Ovary (tissue), 10 donors: ENCODE measurements at regions of chr9 and their contacts with region 1.

Region 1: DNA sequence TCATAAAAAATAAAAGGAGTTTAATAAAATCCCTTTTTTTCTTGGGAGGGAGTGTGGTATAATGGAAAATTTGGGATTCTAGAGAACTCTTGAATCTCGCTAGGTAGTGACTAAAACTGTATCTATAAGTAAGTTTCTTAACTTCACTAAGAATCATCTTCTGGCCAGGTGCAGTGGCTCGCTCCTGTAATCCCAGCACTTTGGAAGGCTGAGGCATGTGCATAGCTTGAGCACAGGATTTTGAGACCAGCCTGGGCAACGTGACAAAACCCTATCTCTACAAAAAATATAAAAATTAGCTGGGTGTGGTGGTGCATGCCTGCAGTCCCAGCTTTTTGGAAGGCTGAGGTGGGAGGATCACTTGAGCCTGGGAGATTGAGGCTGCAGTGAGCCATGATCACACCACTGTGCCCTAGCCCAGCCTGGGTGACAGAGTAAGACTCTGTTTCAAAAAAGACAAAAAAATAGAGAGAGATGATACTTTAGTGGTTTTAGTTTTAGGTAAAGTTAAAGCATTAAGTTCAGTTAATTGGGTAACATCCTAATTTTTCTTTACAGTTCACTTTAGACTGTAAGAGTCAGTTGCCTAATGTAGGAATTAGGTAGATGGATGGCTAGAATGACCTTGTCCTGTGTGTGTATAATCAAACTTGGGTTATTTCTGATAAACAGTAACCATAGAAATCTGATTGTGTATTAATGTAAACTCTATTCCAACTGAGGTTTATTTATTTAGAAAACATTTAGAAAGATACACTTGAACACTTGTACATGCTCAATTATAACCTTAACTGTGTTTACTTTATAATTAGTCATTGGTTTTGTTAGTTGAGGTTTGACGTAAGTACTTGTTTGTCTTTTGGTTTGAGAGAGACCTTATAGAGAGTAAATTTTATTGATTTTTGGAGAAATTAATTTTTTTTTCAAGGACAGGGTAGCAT is 17.8 kb downstream of the UNC13B start:
- DNase-seq: no peak
- H3K4me3 ChIP-seq: no peak overlapping the region
- H3K27ac ChIP-seq: no peak overlapping the region
- H3K4me1 ChIP-seq: no peaks in the 10 kb centered on the region
- H3K27me3 ChIP-seq: no peaks in the 10 kb centered on the region
- CTCF ChIP-seq: no peak
- EP300 ChIP-seq: no peak
- POLR2A ChIP-seq: no peak

Region 2: GRCh38 chr9:35237311-35237710 is 57.7 kb after region 1 on chr9:
- intact Hi-C with region 1: loop called in 1 of 4 experiments (anchors 10 kb)
- DNase-seq: no peak
- H3K4me3 ChIP-seq: no peak overlapping the region
- H3K27ac ChIP-seq: no peak overlapping the region
- H3K4me1 ChIP-seq: no peaks in the 10 kb centered on the region
- H3K27me3 ChIP-seq: no peaks in the 10 kb centered on the region
- CTCF ChIP-seq: no peak
- EP300 ChIP-seq: no peak
- POLR2A ChIP-seq: no peak